Activated T-helper 2 cell treated with anti-CD3 and anti-CD28 coated beads, Interferon-gamma antibody, Interleukin-2, Interleukin-4, amounts not matched to agents 10 μg/mL and 5 μg/mL and 100 μg/mL, durations not matched to agents 14 hours and 24 hours and 36 hours (primary cell): ENCODE measurements at regions of chr7 and their contacts with region 1.

Region 1: GRCh38 chr7:44847508-44847920 is 373 bp downstream of the H2AZ2 start:
- DNase-seq: peak; percentile 83
- H3K4me3 Mint-ChIP-seq: peak overlapping the region; percentile 91
- H3K27ac Mint-ChIP-seq: peak overlapping the region; percentile 96
- H3K4me1 Mint-ChIP-seq: peaks cover 44% of the 10 kb centered on the region
- H3K27me3 Mint-ChIP-seq: no peaks in the 10 kb centered on the region

Region 2: DNA sequence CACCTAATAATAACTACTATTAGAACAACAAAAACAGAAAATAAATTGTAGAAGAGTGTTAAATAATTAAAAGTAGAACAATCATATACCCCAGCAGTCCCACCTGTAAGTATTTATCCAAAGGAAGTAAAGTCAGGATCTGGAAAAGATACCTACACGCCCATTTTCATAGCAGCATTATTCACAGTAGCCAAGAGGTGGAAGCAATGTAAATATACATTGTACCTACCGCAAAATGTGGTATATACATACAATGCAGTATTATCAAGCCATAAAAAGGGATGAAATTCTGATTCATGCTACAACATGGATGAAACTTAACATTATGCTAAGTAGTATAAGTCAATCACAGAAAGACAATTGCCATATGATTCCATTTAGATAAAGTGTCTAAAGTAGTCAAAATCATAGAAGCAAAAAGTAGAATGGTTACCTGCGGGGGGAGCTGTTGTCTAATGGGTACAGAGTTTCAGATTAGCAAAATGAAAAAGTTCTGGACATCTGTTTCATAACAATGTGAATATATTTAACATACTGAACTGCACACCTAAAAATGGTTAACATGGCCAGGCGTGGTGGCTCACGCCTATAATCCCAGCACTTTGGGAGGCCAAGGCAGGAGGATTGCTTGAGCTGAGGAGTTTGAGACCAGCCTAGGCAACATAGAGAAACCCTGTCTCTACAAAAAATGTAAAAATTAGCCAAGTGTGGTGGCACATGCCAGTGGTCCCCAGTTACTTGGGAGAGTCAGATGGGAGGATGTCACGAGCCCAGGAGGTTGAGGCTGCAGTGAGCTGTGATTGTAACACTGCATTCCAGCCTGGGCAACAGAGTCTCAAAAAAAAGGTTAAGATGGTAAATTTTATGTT is 259.4 kb before region 1 on chr7:
- intact Hi-C with region 1: loop called (anchors 1 kb)
- DNase-seq: peak; percentile 35
- H3K4me3 Mint-ChIP-seq: no peak overlapping the region
- H3K27ac Mint-ChIP-seq: no peak overlapping the region
- H3K4me1 Mint-ChIP-seq: peaks cover 12% of the 10 kb centered on the region
- H3K27me3 Mint-ChIP-seq: peaks cover 3% of the 10 kb centered on the region

Region 3: GRCh38 chr7:44638611-44639557 is 208.6 kb before region 1 on chr7:
- intact Hi-C with region 1: loop called (anchors 1 kb)
- DNase-seq: peak; percentile 84
- H3K4me3 Mint-ChIP-seq: peak overlapping the region; percentile 79
- H3K27ac Mint-ChIP-seq: peak overlapping the region; percentile 99
- H3K4me1 Mint-ChIP-seq: peaks cover 70% of the 10 kb centered on the region
- H3K27me3 Mint-ChIP-seq: no peaks in the 10 kb centered on the region

Region 4: DNA sequence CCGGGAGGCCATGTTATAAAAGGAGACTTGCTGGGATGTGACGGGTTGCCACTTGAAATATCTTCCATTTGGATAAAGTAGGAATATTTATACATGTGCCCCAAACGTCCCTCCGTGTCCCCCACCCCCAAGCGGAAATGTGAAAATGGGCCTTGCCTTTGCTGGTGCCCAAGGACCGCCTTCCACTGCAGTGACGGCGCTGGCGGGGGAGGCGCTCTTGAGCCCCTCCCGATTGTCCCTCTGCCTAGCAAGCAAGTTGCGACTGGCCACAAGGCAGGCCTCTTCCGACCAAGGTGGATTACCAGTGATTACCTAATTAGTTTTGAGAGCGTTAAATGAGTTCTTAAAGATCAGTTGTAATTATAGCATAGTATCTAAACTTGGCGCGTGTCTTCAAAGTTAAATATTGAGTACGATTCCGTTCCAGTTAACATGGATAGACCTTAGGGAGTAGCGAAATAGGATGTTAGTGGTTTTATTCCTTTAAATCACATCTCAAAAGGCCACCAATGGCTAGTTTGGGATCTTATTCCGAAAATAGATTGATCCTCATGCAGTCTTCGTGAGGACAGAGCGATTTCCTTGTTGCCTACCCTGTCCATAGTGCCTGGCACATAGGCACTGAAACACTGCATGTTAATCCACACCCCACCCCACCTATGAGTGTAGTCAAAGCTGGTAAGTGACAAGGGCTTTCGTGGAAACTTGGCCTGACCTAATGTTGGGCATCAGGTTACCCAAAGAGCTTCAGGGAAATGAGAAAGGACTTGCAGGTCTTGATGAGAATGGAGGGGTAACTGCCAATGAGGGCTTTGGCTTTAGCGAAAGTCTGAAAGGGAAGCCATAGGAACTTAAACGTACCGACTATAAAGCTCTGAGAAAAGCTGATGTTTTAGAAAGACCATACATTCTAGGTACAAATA is 49.9 kb before region 1 on chr7:
- intact Hi-C with region 1: loop called (anchors 1 kb)
- DNase-seq: peak; percentile 80
- H3K4me3 Mint-ChIP-seq: peak overlapping the region; percentile 98
- H3K27ac Mint-ChIP-seq: peak overlapping the region; percentile 95
- H3K4me1 Mint-ChIP-seq: peaks cover 28% of the 10 kb centered on the region
- H3K27me3 Mint-ChIP-seq: no peaks in the 10 kb centered on the region

Region 5: GRCh38 chr7:44885394-44886317 is 38.1 kb after region 1 on chr7 and contains the start of gene PURB:
- intact Hi-C with region 1: loop called (anchors 1 kb)
- DNase-seq: peak; percentile 97
- H3K4me3 Mint-ChIP-seq: peak within 1 kb of the TSS; percentile 97
- H3K27ac Mint-ChIP-seq: peak within 1 kb of the TSS; percentile 99
- H3K4me1 Mint-ChIP-seq: peaks cover 35% of the 10 kb centered on the region
- H3K27me3 Mint-ChIP-seq: no peaks in the 10 kb centered on the region
- total RNA-seq, gene PURB: 32.9 and 33.9 TPM in 2 replicates

Region 6: DNA sequence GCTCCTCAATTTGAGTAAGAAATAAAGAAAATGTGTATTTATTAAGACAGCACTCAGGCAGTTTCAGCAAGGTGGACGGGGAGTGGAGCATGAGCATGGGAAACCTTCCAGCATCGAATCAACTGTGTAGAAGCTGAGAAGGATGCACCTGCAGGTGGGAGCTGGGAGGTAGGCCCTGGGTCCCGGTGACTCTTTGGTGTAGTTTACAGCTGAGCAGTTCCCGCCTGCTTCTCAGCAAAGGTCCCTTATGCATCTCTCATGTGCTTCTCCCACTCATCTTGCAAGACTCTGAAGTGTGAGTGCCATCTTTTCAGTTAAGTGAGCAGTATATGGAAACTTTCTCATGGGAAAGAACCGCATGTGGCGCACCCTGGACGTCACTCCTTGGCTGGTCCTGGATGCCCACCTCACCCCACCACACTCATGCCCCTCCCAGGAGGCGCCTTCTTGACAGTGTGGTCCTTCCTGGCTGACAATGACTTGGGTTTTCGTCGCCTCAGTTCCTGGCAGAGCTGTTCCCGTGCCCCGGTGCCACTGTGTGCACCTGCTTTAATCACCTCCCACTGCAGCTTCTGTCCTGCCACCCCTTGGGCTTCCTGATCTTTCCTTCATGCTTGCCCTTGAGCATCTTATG is 57.6 kb after region 1 on chr7:
- intact Hi-C with region 1: no loop called
- DNase-seq: no peak
- H3K4me3 Mint-ChIP-seq: no peak overlapping the region
- H3K27ac Mint-ChIP-seq: no peak overlapping the region
- H3K4me1 Mint-ChIP-seq: no peaks in the 10 kb centered on the region
- H3K27me3 Mint-ChIP-seq: no peaks in the 10 kb centered on the region

Region 7: GRCh38 chr7:44921607-44922359 is 74.3 kb after region 1 on chr7:
- intact Hi-C with region 1: loop called (anchors 2 kb)
- DNase-seq: peak; percentile 83
- H3K4me3 Mint-ChIP-seq: no peak overlapping the region
- H3K27ac Mint-ChIP-seq: no peak overlapping the region
- H3K4me1 Mint-ChIP-seq: peaks cover 14% of the 10 kb centered on the region
- H3K27me3 Mint-ChIP-seq: no peaks in the 10 kb centered on the region

Region 8: DNA sequence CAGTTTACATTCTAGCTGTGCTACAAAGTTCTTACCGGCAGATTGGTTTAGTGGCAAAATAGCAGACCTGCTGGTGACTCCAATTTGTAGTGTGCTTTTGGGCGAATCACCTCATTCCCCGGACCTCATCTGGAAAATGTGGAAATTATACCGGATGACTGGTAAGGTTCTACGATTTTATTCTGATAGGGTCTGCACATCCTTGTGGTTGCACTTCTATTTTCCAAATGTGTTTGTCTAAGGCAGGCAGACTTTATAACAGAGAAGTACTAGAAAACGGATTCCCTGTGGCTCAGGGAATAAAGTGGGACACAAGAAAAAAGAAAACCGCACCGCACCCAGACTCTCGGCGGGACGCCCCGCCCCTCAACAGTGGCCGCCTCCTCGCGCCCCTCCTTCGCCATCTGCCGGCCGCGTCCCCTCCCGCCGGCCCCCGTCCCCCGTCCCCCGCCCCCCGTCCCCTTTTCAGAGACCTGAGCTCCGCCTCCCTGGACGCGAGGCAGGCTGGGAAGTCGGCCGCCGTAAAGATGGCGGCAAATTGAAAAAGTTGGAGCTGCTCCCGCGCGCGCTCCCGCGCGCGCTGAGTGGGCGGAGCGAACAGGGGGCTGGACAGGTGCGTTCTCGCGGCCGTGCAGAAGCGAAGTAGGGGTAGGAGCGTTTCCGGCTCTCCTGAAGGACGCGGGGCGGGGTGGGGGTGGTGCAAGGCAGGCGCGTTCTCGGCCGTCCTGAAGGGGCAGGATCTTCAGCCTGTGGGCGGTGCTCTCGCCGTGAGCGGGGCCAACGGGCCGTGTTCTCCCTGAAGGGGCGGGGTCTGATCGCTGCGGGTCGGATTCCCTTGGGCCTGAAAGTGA is 152.0 kb after region 1 on chr7:
- intact Hi-C with region 1: loop called (anchors 1 kb)
- DNase-seq: peak; percentile 100
- H3K4me3 Mint-ChIP-seq: peak overlapping the region; percentile 86
- H3K27ac Mint-ChIP-seq: peak overlapping the region; percentile 93
- H3K4me1 Mint-ChIP-seq: peaks cover 50% of the 10 kb centered on the region
- H3K27me3 Mint-ChIP-seq: no peaks in the 10 kb centered on the region